ENCODE measurements at regions of chr2 and their contacts with region 1.

Region 1: GRCh38 chr2:19863303-19864041 is 38.3 kb downstream of the TTC32 start:
- DNase-seq: peak; percentile 70
- H3K4me3 ChIP-seq: no peak overlapping the region; the same call in 1 of the 2 replicates
- H3K27ac ChIP-seq: no peak overlapping the region
- H3K4me1 ChIP-seq: peaks cover 3% of the 10 kb centered on the region; the same call in 1 of the 2 replicates
- H3K27me3 ChIP-seq: no peaks in the 10 kb centered on the region

Region 2: GRCh38 chr2:18413676-18414396 is 1449.6 kb before region 1 on chr2:
- in situ Hi-C with region 1: loop called (anchors 10 kb)
- DNase-seq: peak; percentile 97
- H3K4me3 ChIP-seq: peak overlapping the region; percentile 57
- H3K27ac ChIP-seq: peak overlapping the region; percentile 77
- H3K4me1 ChIP-seq: peaks cover 30% of the 10 kb centered on the region
- H3K27me3 ChIP-seq: no peaks in the 10 kb centered on the region

Region 3: DNA sequence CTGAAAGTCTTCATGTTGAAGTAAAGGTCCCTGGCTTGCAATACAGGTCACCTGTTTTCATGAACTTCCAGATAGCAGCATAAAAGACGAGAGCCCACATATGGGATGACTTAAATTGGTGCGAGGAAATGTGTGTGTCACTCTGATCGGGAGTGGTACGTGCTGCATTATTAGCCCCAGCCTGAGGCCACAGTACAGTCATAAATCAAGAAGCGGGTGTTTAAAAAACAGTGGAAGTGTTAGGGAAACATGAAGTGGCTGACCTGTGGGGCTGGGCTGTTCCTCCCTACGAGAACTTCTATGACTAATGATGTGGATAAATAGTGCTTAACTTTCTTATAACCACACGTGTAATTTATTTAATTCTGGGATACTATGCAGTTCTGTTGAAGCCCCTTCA is 1327.4 kb before region 1 on chr2:
- in situ Hi-C with region 1: loop called (anchors 10 kb)
- DNase-seq: peak; percentile 75
- H3K4me3 ChIP-seq: no peak overlapping the region
- H3K27ac ChIP-seq: no peak overlapping the region
- H3K4me1 ChIP-seq: peaks cover 6% of the 10 kb centered on the region
- H3K27me3 ChIP-seq: no peaks in the 10 kb centered on the region

Region 4: GRCh38 chr2:18749912-18750526 is 1113.5 kb before region 1 on chr2:
- in situ Hi-C with region 1: loop called (anchors 25 kb)
- DNase-seq: peak; percentile 73
- H3K4me3 ChIP-seq: no peak overlapping the region
- H3K27ac ChIP-seq: no peak overlapping the region
- H3K4me1 ChIP-seq: 0 out of 2 replicates have a peak, but pooled peaks cover 10% of the 10 kb centered on the region
- H3K27me3 ChIP-seq: no peaks in the 10 kb centered on the region

Region 5: DNA sequence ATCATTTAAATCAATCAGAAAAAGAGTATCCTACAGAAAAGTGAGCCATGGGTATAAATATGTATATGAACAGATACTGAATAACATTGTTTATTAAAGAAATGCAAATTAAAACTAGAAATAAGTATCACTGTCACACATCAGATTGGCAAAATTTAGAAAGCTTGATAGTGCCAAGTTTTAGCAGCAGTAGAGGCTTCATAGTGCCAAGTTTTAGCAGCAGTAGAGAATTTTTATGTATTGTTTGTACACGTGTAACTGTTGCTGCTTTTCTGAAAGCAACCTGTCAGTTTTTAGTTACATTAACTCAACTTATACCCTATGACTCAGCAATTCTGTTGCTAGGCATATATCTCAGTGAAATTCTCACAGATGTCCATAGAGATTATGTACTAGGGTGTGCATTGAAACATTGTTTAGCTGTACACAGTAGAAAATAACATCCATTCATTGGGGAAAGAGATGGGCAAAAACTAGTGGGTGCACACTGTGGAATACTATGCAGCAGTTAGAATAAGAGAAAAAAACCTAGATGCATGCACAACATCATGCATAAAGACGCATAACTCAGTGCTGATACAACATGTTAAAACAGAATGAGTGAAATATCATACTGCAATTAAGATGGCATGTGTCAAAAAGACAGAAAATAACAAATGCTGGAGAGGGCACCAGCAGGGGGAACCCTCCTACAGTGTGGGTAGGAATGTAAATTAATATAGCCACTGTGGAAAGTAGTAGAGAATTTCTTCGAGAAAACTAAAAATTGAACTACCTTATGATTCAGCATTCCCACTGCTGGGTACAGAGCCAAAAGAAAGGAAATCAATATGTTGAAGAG is 979.6 kb before region 1 on chr2:
- in situ Hi-C with region 1: loop called (anchors 25 kb)
- DNase-seq: peak; percentile 61
- H3K4me3 ChIP-seq: no peak overlapping the region
- H3K27ac ChIP-seq: no peak overlapping the region
- H3K4me1 ChIP-seq: no peaks in the 10 kb centered on the region
- H3K27me3 ChIP-seq: no peaks in the 10 kb centered on the region

Region 6: DNA sequence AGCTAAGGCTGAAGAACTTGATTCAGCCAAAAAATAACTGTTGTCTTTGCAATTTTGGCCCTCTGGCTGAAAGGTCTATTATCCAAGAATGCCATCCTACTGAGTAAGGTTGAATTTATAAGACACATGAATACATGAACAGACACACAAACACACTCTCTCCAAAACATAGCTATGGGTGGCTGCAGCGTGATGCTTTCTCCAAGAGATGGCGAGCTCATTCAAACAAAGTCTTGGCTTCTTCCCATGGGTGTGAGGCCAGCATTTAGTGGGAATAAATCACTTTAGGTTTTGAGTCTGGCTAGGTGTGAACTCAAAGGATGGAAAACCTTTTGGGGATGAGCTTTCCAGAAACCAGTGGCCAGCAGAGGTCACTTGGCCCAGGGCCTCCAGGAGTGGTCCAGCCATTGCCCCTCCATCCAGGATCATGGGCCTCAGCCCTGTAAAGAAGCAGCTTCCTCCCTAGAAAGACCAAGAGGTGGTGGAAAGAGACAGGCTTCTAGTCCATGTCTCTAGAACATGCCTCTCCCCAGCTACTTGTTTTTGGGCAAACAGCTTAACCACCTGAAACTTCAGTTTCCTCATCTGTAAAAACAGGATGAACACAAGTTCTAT is 494.0 kb before region 1 on chr2:
- in situ Hi-C with region 1: loop called (anchors 5 kb)
- DNase-seq: peak; percentile 74
- H3K4me3 ChIP-seq: no peak overlapping the region
- H3K27ac ChIP-seq: no peak overlapping the region
- H3K4me1 ChIP-seq: no peaks in the 10 kb centered on the region
- H3K27me3 ChIP-seq: no peaks in the 10 kb centered on the region

Region 7: DNA sequence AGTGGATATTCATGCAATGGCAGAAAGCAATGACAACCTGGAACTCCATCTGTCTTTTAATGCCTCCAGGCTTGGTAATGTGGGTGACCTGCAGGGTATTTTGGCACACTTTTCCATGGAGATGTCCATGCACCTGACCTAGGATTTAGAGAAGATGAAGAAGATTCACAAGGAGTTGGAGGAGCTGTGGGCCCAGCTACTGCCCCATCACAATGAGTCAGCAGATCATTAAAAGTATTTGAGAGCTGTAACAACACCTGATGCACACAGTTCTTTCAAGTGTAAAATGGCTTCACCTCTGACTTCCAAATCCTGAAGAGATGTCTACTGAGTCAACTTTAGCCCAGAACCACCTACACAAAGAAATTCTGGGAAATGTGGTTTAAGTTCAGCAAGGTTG is 482.9 kb before region 1 on chr2:
- in situ Hi-C with region 1: no loop called
- DNase-seq: no peak
- H3K4me3 ChIP-seq: no peak overlapping the region
- H3K27ac ChIP-seq: no peak overlapping the region
- H3K4me1 ChIP-seq: no peaks in the 10 kb centered on the region
- H3K27me3 ChIP-seq: no peaks in the 10 kb centered on the region

Region 8: GRCh38 chr2:19589791-19590190 is 273.7 kb before region 1 on chr2:
- in situ Hi-C with region 1: no loop called
- DNase-seq: no peak
- H3K4me3 ChIP-seq: no peak overlapping the region
- H3K27ac ChIP-seq: no peak overlapping the region
- H3K4me1 ChIP-seq: no peaks in the 10 kb centered on the region
- H3K27me3 ChIP-seq: no peaks in the 10 kb centered on the region

Region 9: GRCh38 chr2:21083482-21083881 is 1220.0 kb after region 1 on chr2:
- in situ Hi-C with region 1: no loop called
- DNase-seq: no peak
- H3K4me3 ChIP-seq: no peak overlapping the region
- H3K27ac ChIP-seq: no peak overlapping the region
- H3K4me1 ChIP-seq: no peaks in the 10 kb centered on the region
- H3K27me3 ChIP-seq: no peaks in the 10 kb centered on the region